ENCODE measurements at regions of chr5 and their contacts with region 1.

Region 1: DNA sequence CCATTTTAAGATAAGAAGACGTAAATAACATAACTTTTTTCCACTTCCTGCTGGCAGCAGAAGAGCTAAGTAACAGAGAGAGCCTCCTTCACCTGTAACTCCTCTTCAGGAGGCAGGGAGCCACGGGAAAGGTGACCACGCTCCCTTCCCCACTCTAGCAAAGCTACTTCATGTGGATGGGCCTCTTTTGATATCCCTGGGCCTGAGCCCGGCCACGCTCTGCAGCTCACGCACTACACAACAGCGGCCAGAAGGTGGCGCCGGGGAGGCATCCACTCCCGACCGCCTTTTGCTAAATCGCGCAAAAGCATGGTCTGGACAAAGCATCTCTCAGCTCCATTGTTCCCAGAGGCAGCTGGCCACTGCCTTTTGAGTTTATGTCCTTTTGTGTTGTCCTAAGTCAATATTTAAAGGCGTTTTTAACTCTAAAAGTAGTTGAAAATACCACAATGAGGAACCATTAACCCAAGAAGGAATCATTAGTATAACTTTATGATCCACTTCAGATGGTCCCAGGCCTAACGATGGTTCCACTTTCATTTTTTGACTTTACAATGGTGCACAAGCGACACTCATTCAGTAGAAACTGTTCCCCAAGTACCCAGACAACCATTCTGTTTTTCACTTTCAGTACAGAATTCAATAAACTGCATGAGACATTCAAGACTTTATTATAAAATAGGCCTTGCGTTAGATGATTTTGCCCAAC is 23.6 kb downstream of the CMBL start:
- DNase-seq: peak; percentile 42 to 81 (median 65)
- ATAC-seq: peak; percentile 97
- H3K4me3 ChIP-seq: no peak overlapping the region
- H3K4me3 Mint-ChIP-seq: no peak overlapping the region
- H3K27ac ChIP-seq: no peak overlapping the region
- H3K27ac Mint-ChIP-seq: no peak overlapping the region
- H3K4me1 ChIP-seq: no peaks in the 10 kb centered on the region
- H3K4me1 Mint-ChIP-seq: peaks cover 0 to 6% (median 4%) of the 10 kb centered on the region in 7 donors
- H3K27me3 ChIP-seq: no peaks in the 10 kb centered on the region
- H3K27me3 Mint-ChIP-seq: peaks cover 0 to 4% (median 0%) of the 10 kb centered on the region in 5 donors

Region 2: GRCh38 chr5:10364186-10364683 is 80.2 kb after region 1 on chr5:
- CTCF ChIA-PET with region 1: interaction called, 10 read pairs
- POLR2A ChIA-PET with region 1: no interaction called
- intact Hi-C with region 1: loop called (anchors 1 kb)
- DNase-seq: peak in 2 of 9 donors; percentile 15 to 31
- ATAC-seq: peak; percentile 69
- H3K4me3 ChIP-seq: no peak overlapping the region
- H3K4me3 Mint-ChIP-seq: peak overlapping the region in 4 of 10 donors; percentile 3 to 15 (median 10)
- H3K27ac ChIP-seq: no peak overlapping the region
- H3K27ac Mint-ChIP-seq: peak overlapping the region in 2 of 9 donors; percentile 47 to 56
- H3K4me1 ChIP-seq: peaks cover 11 to 15% of the 10 kb centered on the region in 2 donors
- H3K4me1 Mint-ChIP-seq: peaks cover 40 to 94% (median 77%) of the 10 kb centered on the region in 7 donors
- H3K27me3 ChIP-seq: no peaks in the 10 kb centered on the region
- H3K27me3 Mint-ChIP-seq: no peaks in the 10 kb centered on the region

Region 3: DNA sequence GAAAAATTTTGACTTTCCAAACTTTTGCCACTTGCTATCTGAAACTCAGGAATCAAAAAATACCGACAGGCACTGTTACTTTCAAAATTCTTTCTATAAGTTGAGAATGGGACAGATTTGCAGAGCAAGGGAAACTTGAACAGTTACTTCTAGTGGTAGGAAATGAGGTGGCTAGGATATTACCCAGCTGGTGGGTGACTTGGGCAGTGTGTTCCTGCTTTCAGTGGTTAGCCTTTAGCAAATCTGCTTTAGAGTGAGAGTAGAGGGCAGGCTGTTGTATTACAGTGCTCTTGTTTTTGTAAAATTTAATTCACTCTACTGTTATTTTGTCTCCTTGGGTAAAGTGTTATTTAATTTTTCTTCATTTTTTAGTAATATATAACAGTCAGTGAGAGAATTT is 117.4 kb after region 1 on chr5:
- CTCF ChIA-PET with region 1: interaction called, 4 read pairs
- POLR2A ChIA-PET with region 1: no interaction called
- intact Hi-C with region 1: loop called in 1 of 2 experiments (anchors 1 kb)
- DNase-seq: no peak
- ATAC-seq: no peak
- H3K4me3 ChIP-seq: no peak overlapping the region
- H3K4me3 Mint-ChIP-seq: no peak overlapping the region
- H3K27ac ChIP-seq: no peak overlapping the region
- H3K27ac Mint-ChIP-seq: peak overlapping the region in 2 of 9 donors; percentile 32 to 57
- H3K4me1 ChIP-seq: no peaks in the 10 kb centered on the region
- H3K4me1 Mint-ChIP-seq: peaks cover 0 to 8% (median 2%) of the 10 kb centered on the region in 7 donors
- H3K27me3 ChIP-seq: no peaks in the 10 kb centered on the region
- H3K27me3 Mint-ChIP-seq: no peaks in the 10 kb centered on the region

Region 4: DNA sequence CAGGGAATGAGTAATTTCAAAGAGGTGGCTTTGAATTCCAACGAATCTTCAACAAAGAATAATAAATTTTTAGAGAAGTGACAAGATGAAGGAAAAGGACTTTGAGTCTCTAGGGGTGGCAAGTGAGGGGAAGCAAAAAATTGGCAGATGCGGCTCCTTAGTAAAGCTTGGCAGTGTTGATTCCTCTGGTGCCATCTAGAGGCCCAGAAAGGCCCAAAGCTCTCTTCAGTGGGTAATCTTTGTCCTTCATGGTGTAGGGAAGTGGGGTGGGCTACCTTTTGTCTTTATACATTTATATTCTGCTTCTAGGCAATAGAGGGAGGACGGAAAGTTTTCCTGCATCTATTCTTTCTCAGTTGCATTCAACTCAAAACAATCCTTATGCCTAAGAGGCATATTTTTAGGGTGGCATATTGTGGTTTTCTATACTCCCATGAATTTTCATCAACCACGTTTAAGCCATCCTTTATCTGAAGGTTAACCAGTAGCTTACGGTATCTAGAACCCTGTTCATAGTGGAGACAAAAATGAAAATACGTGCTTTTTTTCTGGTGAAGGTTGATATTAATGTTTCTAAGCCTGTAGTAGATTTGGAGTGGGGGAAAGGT is 140.1 kb after region 1 on chr5:
- CTCF ChIA-PET with region 1: interaction called, 18 read pairs
- POLR2A ChIA-PET with region 1: no interaction called
- intact Hi-C with region 1: loop called (anchors 1 kb)
- DNase-seq: peak in 3 of 9 donors; percentile 19 to 29 (median 22)
- ATAC-seq: peak; percentile 60
- H3K4me3 ChIP-seq: no peak overlapping the region
- H3K4me3 Mint-ChIP-seq: no peak overlapping the region
- H3K27ac ChIP-seq: no peak overlapping the region
- H3K27ac Mint-ChIP-seq: peak overlapping the region in 4 of 9 donors; percentile 15 to 46 (median 24)
- H3K4me1 ChIP-seq: peaks cover 0 to 21% of the 10 kb centered on the region in 2 donors
- H3K4me1 Mint-ChIP-seq: peaks cover 11 to 53% (median 35%) of the 10 kb centered on the region in 7 donors
- H3K27me3 ChIP-seq: no peaks in the 10 kb centered on the region
- H3K27me3 Mint-ChIP-seq: no peaks in the 10 kb centered on the region

Region 5: GRCh38 chr5:10489810-10490426 is 205.8 kb after region 1 on chr5:
- CTCF ChIA-PET with region 1: interaction called, 3 read pairs
- POLR2A ChIA-PET with region 1: no interaction called
- intact Hi-C with region 1: loop called in 1 of 2 experiments (anchors 2 kb)
- DNase-seq: peak in 1 of 9 donors; percentile 2
- ATAC-seq: peak; percentile 86
- H3K4me3 ChIP-seq: no peak overlapping the region
- H3K4me3 Mint-ChIP-seq: peak overlapping the region in 4 of 10 donors; percentile 16 to 67 (median 31)
- H3K27ac ChIP-seq: no peak overlapping the region
- H3K27ac Mint-ChIP-seq: peak overlapping the region in 8 of 9 donors; percentile 4 to 85 (median 30)
- H3K4me1 ChIP-seq: peaks cover 6 to 10% of the 10 kb centered on the region in 2 donors
- H3K4me1 Mint-ChIP-seq: peaks cover 8 to 33% (median 16%) of the 10 kb centered on the region in 7 donors
- H3K27me3 ChIP-seq: no peaks in the 10 kb centered on the region
- H3K27me3 Mint-ChIP-seq: peaks cover 0 to 5% (median 0%) of the 10 kb centered on the region in 5 donors

Region 6: GRCh38 chr5:10577371-10578292 is 293.6 kb after region 1 on chr5:
- CTCF ChIA-PET with region 1: no interaction called
- POLR2A ChIA-PET with region 1: no interaction called
- intact Hi-C with region 1: loop called in 1 of 2 experiments (anchors 5 kb)
- DNase-seq: peak in 1 of 9 donors; percentile 19
- ATAC-seq: peak; percentile 35
- H3K4me3 ChIP-seq: no peak overlapping the region
- H3K4me3 Mint-ChIP-seq: peak overlapping the region in 1 of 10 donors; percentile 33
- H3K27ac ChIP-seq: no peak overlapping the region
- H3K27ac Mint-ChIP-seq: no peak overlapping the region
- H3K4me1 ChIP-seq: no peaks in the 10 kb centered on the region
- H3K4me1 Mint-ChIP-seq: peaks cover 0 to 43% (median 27%) of the 10 kb centered on the region in 7 donors
- H3K27me3 ChIP-seq: no peaks in the 10 kb centered on the region
- H3K27me3 Mint-ChIP-seq: no peaks in the 10 kb centered on the region

Region 7: GRCh38 chr5:10627160-10627701 is 343.1 kb after region 1 on chr5:
- CTCF ChIA-PET with region 1: interaction called, 19 read pairs
- POLR2A ChIA-PET with region 1: interaction called, 3 read pairs
- intact Hi-C with region 1: loop called (anchors 1 kb)
- DNase-seq: peak in 1 of 9 donors; percentile 8
- ATAC-seq: peak; percentile 1
- H3K4me3 ChIP-seq: peak overlapping the region; percentile 59
- H3K4me3 Mint-ChIP-seq: peak overlapping the region; percentile 78 to 95 (median 86)
- H3K27ac ChIP-seq: no peak overlapping the region
- H3K27ac Mint-ChIP-seq: peak overlapping the region; percentile 8 to 72 (median 49)
- H3K4me1 ChIP-seq: peaks cover 0 to 8% of the 10 kb centered on the region in 2 donors
- H3K4me1 Mint-ChIP-seq: peaks cover 13 to 43% (median 17%) of the 10 kb centered on the region in 7 donors
- H3K27me3 ChIP-seq: no peaks in the 10 kb centered on the region
- H3K27me3 Mint-ChIP-seq: peaks cover 0 to 7% (median 0%) of the 10 kb centered on the region in 5 donors

Measured in naive thymus-derived CD4-positive, alpha-beta T cell (primary cell).